Endothelial cell of umbilical vein (primary cell): ENCODE measurements at regions of chr4 and their contacts with region 1.

Region 1: GRCh38 chr4:157075811-157076577 is at the start of gene GLRB:
- DNase-seq: peak; percentile 45
- H3K4me3 ChIP-seq: peak within 1 kb of the TSS; percentile 66 to 76 (median 76)
- H3K27ac ChIP-seq: no peak within 1 kb of the TSS
- H3K4me1 ChIP-seq: peaks cover 5% of the 10 kb centered on the region
- H3K27me3 ChIP-seq: no peaks in the 10 kb centered on the region
- CTCF ChIP-seq: no peak
- POLR2A ChIP-seq: no peak
- total RNA-seq, gene GLRB: 5.7 and 6.2 TPM in 2 replicates

Region 2: GRCh38 chr4:156322592-156322991 is 753.4 kb before region 1 on chr4:
- CTCF ChIA-PET with region 1: no interaction called
- POLR2A ChIA-PET with region 1: no interaction called
- dilution Hi-C with region 1: no loop called
- intact Hi-C with region 1: loop called (anchors 5 kb)
- DNase-seq: no peak
- H3K4me3 ChIP-seq: no peak overlapping the region
- H3K27ac ChIP-seq: no peak overlapping the region
- H3K4me1 ChIP-seq: no peaks in the 10 kb centered on the region
- H3K27me3 ChIP-seq: no peaks in the 10 kb centered on the region
- CTCF ChIP-seq: no peak
- POLR2A ChIP-seq: no peak

Region 3: GRCh38 chr4:156838761-156839160 is 237.2 kb before region 1 on chr4:
- CTCF ChIA-PET with region 1: no interaction called
- POLR2A ChIA-PET with region 1: no interaction called
- dilution Hi-C with region 1: no loop called
- intact Hi-C with region 1: no loop called
- DNase-seq: no peak
- H3K4me3 ChIP-seq: no peak overlapping the region
- H3K27ac ChIP-seq: no peak overlapping the region
- H3K4me1 ChIP-seq: no peaks in the 10 kb centered on the region
- H3K27me3 ChIP-seq: no peaks in the 10 kb centered on the region
- CTCF ChIP-seq: no peak
- POLR2A ChIP-seq: no peak

Region 4: GRCh38 chr4:156889616-156890594 is 186.1 kb before region 1 on chr4:
- CTCF ChIA-PET with region 1: no interaction called
- POLR2A ChIA-PET with region 1: no interaction called
- dilution Hi-C with region 1: no loop called
- intact Hi-C with region 1: no loop called
- DNase-seq: no peak
- H3K4me3 ChIP-seq: no peak overlapping the region
- H3K27ac ChIP-seq: no peak overlapping the region
- H3K4me1 ChIP-seq: no peaks in the 10 kb centered on the region
- H3K27me3 ChIP-seq: no peaks in the 10 kb centered on the region
- CTCF ChIP-seq: no peak
- POLR2A ChIP-seq: no peak

Region 5: GRCh38 chr4:156962528-156962974 is 113.4 kb before region 1 on chr4:
- CTCF ChIA-PET with region 1: no interaction called
- POLR2A ChIA-PET with region 1: no interaction called
- dilution Hi-C with region 1: no loop called
- intact Hi-C with region 1: no loop called
- DNase-seq: no peak
- H3K4me3 ChIP-seq: no peak overlapping the region
- H3K27ac ChIP-seq: no peak overlapping the region
- H3K4me1 ChIP-seq: no peaks in the 10 kb centered on the region
- H3K27me3 ChIP-seq: no peaks in the 10 kb centered on the region
- CTCF ChIP-seq: no peak
- POLR2A ChIP-seq: no peak

Region 6: GRCh38 chr4:157099506-157099905 is 23.5 kb after region 1 on chr4:
- CTCF ChIA-PET with region 1: no interaction called
- POLR2A ChIA-PET with region 1: no interaction called
- dilution Hi-C with region 1: no loop called
- intact Hi-C with region 1: loop called (anchors 1 kb)
- DNase-seq: peak; percentile 66
- H3K4me3 ChIP-seq: no peak overlapping the region
- H3K27ac ChIP-seq: no peak overlapping the region
- H3K4me1 ChIP-seq: no peaks in the 10 kb centered on the region
- H3K27me3 ChIP-seq: no peaks in the 10 kb centered on the region
- CTCF ChIP-seq: no peak
- POLR2A ChIP-seq: no peak

Region 7: DNA sequence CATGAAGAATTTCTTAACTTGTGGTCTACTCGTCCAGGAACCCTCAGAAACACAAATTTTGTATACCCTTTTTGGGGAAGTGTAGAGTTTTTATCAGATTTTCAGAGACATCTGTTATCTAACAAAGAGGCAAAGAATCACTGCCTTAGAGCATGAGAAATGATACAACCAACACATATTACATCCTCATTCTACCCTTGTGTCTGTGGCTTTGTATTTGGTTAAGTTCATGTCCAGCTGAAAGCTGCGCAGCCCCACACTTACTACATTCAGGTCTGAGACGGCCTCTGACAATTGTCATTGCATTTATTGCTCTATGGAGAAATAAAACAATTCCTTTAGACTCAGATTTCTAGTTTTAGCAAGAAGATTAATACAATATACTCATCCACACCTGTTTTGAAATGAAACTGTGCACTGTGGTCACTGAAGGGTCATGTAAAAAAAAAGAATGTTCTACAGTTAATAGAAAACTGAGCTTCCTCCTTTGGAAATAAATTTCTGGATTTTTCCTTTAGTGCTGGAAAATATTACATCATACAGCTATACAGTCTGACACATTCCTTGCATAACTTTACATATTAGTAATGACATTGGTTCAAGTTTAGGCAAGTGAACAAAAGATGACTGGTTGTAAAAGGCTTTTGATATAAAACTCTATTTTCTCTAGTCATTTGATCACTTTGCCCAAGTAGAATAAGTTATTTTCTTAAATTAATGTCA is 39.8 kb after region 1 on chr4:
- CTCF ChIA-PET with region 1: no interaction called
- POLR2A ChIA-PET with region 1: no interaction called
- dilution Hi-C with region 1: no loop called
- intact Hi-C with region 1: no loop called
- DNase-seq: peak; percentile 85
- H3K4me3 ChIP-seq: no peak overlapping the region
- H3K27ac ChIP-seq: peak overlapping the region; percentile 94
- H3K4me1 ChIP-seq: peaks cover 12% of the 10 kb centered on the region
- H3K27me3 ChIP-seq: no peaks in the 10 kb centered on the region
- CTCF ChIP-seq: no peak
- POLR2A ChIP-seq: no peak